ENCODE measurements at regions of chrX and their contacts with region 1.

Region 1: DNA sequence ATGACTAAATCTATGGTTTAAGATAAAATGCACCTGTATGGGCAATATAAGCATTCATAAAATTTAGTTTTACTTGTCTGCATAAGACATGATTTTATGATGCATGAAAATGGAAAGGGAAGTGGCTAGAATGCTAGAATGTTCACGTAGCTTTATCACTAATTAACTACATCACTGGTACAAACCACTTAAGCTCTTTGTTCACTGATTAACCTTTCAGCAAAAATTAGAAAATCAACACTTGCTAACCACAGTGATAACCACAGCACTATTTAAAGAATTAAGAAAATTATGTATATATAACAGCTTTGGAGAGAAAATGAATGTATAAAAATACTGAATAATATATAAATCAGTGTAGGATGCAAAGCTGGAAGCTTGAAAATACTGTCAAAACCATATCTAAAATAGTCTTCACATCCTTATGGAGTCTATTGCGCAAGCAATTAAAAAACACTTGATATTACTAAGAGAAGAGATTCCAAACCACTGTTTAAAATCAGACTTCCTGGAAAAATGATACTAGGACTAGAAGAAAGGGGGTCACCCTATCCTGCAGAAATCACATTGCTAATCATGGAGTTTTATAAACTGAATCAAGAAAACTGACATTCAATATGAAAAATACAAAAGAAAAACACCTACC is 51.9 kb downstream of the EFHC2 start:
- DNase-seq: no peak
- ATAC-seq: no peak
- H3K4me3 ChIP-seq: no peak overlapping the region
- H3K27ac ChIP-seq: no peak overlapping the region
- H3K4me1 ChIP-seq: no peaks in the 10 kb centered on the region
- H3K27me3 ChIP-seq: peaks cover 2% of the 10 kb centered on the region
- CTCF ChIP-seq: no peak
- POLR2A ChIP-seq: no peak
- RAD21 ChIP-seq: no peak

Region 2: DNA sequence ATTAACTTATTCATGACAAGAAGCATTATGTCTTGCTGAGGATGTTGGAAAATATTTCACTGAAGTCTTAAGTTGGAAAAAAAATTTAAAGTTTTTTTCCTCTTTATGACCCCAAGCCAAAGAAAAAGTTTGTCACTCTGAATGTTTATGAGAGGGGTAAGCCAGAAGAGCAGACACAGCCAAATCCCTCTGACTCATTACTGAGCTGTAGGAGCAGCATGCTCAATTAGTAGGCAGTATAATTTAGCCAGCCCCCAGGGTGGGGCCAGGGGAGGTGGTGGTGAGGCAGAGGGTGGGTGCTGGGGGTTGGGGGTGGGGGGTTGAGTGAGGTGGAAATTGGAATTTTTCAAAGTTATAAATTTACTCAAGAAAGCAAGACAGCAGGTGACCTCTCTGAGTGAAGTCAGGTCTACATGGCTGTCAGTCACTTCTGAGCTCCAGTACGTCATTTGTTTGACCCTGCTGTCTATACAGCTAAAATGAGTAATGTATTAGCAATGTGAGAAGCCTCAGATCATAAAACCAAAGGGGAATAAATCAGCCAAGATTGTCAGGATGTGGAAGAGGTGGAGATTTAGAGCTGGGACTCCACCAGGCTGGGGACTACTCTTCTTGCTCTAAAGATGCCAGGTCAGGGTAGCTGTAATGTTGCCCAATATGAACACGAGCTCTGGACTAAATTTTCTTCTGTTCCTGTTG is 219.6 kb before region 1 on chrX:
- CTCF ChIA-PET with region 1: interaction called, 12 read pairs
- POLR2A ChIA-PET with region 1: no interaction called
- dilution Hi-C with region 1: no loop called
- in situ Hi-C with region 1: no loop called
- intact Hi-C with region 1: no loop called
- DNase-seq: peak; percentile 55
- ATAC-seq: peak; percentile 90
- H3K4me3 ChIP-seq: no peak overlapping the region
- H3K27ac ChIP-seq: no peak overlapping the region
- H3K4me1 ChIP-seq: no peaks in the 10 kb centered on the region
- H3K27me3 ChIP-seq: peaks cover 1% of the 10 kb centered on the region; the same call in 1 of the 2 replicates
- CTCF ChIP-seq: no peak
- POLR2A ChIP-seq: no peak
- RAD21 ChIP-seq: no peak

Region 3: GRCh38 chrX:44265559-44265958 is 26.0 kb before region 1 on chrX:
- CTCF ChIA-PET with region 1: no interaction called
- POLR2A ChIA-PET with region 1: no interaction called
- dilution Hi-C with region 1: no loop called
- in situ Hi-C with region 1: no loop called
- intact Hi-C with region 1: no loop called
- DNase-seq: no peak
- ATAC-seq: no peak
- H3K4me3 ChIP-seq: no peak overlapping the region
- H3K27ac ChIP-seq: no peak overlapping the region
- H3K4me1 ChIP-seq: no peaks in the 10 kb centered on the region
- H3K27me3 ChIP-seq: peaks cover 7% of the 10 kb centered on the region
- CTCF ChIP-seq: no peak
- POLR2A ChIP-seq: no peak
- RAD21 ChIP-seq: no peak

Region 4: GRCh38 chrX:44775726-44776255 is 484.2 kb after region 1 on chrX:
- CTCF ChIA-PET with region 1: no interaction called
- POLR2A ChIA-PET with region 1: no interaction called
- dilution Hi-C with region 1: no loop called
- in situ Hi-C with region 1: no loop called
- intact Hi-C with region 1: no loop called
- DNase-seq: no peak
- ATAC-seq: no peak
- H3K4me3 ChIP-seq: no peak overlapping the region
- H3K27ac ChIP-seq: no peak overlapping the region
- H3K4me1 ChIP-seq: no peaks in the 10 kb centered on the region
- H3K27me3 ChIP-seq: peaks cover 3% of the 10 kb centered on the region; the same call in 1 of the 2 replicates
- CTCF ChIP-seq: no peak
- POLR2A ChIP-seq: no peak
- RAD21 ChIP-seq: no peak

Region 5: GRCh38 chrX:45200741-45201234 is 909.2 kb after region 1 on chrX and contains the start of gene DIPK2B:
- CTCF ChIA-PET with region 1: no interaction called
- POLR2A ChIA-PET with region 1: interaction called, 11 read pairs
- dilution Hi-C with region 1: no loop called
- in situ Hi-C with region 1: no loop called
- intact Hi-C with region 1: no loop called
- DNase-seq: no peak
- ATAC-seq: no peak
- H3K4me3 ChIP-seq: no peak within 1 kb of the TSS
- H3K27ac ChIP-seq: no peak within 1 kb of the TSS
- H3K4me1 ChIP-seq: no peaks in the 10 kb centered on the region
- H3K27me3 ChIP-seq: peaks cover 24% of the 10 kb centered on the region
- CTCF ChIP-seq: no peak
- POLR2A ChIP-seq: no peak
- RAD21 ChIP-seq: no peak
- total RNA-seq, gene DIPK2B: not detected in 2 replicates